Heart left ventricle (tissue), 16 donors: ENCODE measurements at regions of chr7 and their contacts with region 1.

Region 1: DNA sequence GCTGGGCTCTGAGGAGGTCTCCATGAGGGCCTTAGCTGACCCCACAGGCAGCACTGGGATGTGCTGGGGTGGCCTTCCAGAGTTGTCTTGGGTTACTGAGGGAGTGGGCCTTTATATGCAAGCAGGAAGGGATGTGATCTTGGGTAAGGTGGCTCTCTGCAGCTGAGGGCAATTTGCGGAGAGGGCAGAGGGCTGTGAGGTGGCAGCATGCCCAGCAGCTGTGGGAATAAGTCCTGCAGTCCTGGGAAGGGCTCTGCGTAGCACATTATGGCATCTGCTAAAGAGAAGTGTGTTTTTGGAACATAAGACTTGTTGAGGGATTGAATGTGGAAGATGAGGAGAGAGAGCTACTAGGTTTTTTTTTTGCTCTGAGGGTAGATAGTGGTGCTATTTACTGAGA is 99.6 kb upstream of the KMT2E start:
- DNase-seq: no peak
- ATAC-seq: no peak
- H3K4me3 ChIP-seq: no peak overlapping the region
- H3K27ac ChIP-seq: no peak overlapping the region
- H3K4me1 ChIP-seq: peaks cover 0 to 2% (median 0%) of the 10 kb centered on the region in 12 donors
- H3K27me3 ChIP-seq: no peaks in the 10 kb centered on the region
- CTCF ChIP-seq: no peak
- POLR2A ChIP-seq: no peak

Region 2: GRCh38 chr7:104643587-104644217 is 270.7 kb before region 1 on chr7:
- intact Hi-C with region 1: loop called in 1 of 10 experiments (anchors 10 kb)
- DNase-seq: no peak
- ATAC-seq: no peak
- H3K4me3 ChIP-seq: no peak overlapping the region
- H3K27ac ChIP-seq: no peak overlapping the region
- H3K4me1 ChIP-seq: no peaks in the 10 kb centered on the region
- H3K27me3 ChIP-seq: peaks cover 0 to 15% (median 0%) of the 10 kb centered on the region in 9 donors
- CTCF ChIP-seq: peak in 6 of 12 donors; percentile 15 to 35 (median 24)
- POLR2A ChIP-seq: no peak

Region 3: GRCh38 chr7:104895522-104896236 is 18.7 kb before region 1 on chr7:
- intact Hi-C with region 1: no loop called
- DNase-seq: no peak
- ATAC-seq: no peak
- H3K4me3 ChIP-seq: no peak overlapping the region
- H3K27ac ChIP-seq: no peak overlapping the region
- H3K4me1 ChIP-seq: peaks cover 0 to 3% (median 0%) of the 10 kb centered on the region in 12 donors
- H3K27me3 ChIP-seq: no peaks in the 10 kb centered on the region
- CTCF ChIP-seq: no peak
- POLR2A ChIP-seq: no peak